Activated CD8-positive, alpha-beta T cell treated with anti-CD3 and anti-CD28 coated beads for 36 hours (primary cell): ENCODE measurements at regions of chrX and their contacts with region 1.

Region 1: GRCh38 chrX:17032351-17032750 is 85.9 kb downstream of the REPS2 start:
- DNase-seq: no peak
- ATAC-seq: no peak
- H3K4me3 Mint-ChIP-seq: no peak overlapping the region
- H3K27ac Mint-ChIP-seq: no peak overlapping the region
- H3K4me1 Mint-ChIP-seq: no peaks in the 10 kb centered on the region
- H3K27me3 Mint-ChIP-seq: no peaks in the 10 kb centered on the region
- CTCF ChIP-seq: no peak

Region 2: GRCh38 chrX:16953606-16954220 is 78.6 kb before region 1 on chrX:
- CTCF ChIA-PET with region 1: no interaction called
- POLR2A ChIA-PET with region 1: no interaction called
- intact Hi-C with region 1: no loop called
- DNase-seq: no peak
- ATAC-seq: no peak
- H3K4me3 Mint-ChIP-seq: no peak overlapping the region
- H3K27ac Mint-ChIP-seq: no peak overlapping the region
- H3K4me1 Mint-ChIP-seq: no peaks in the 10 kb centered on the region
- H3K27me3 Mint-ChIP-seq: peaks cover 3% of the 10 kb centered on the region
- CTCF ChIP-seq: no peak

Region 3: GRCh38 chrX:17046478-17047097 is 14.2 kb after region 1 on chrX:
- CTCF ChIA-PET with region 1: interaction called, 10 read pairs
- POLR2A ChIA-PET with region 1: interaction called, 6 read pairs
- intact Hi-C with region 1: no loop called
- DNase-seq: peak; percentile 65
- ATAC-seq: no peak
- H3K4me3 Mint-ChIP-seq: no peak overlapping the region
- H3K27ac Mint-ChIP-seq: no peak overlapping the region
- H3K4me1 Mint-ChIP-seq: no peaks in the 10 kb centered on the region
- H3K27me3 Mint-ChIP-seq: no peaks in the 10 kb centered on the region
- CTCF ChIP-seq: peak; percentile 42

Region 4: GRCh38 chrX:17078031-17078720 is 45.8 kb after region 1 on chrX:
- CTCF ChIA-PET with region 1: no interaction called
- POLR2A ChIA-PET with region 1: no interaction called
- intact Hi-C with region 1: no loop called
- DNase-seq: no peak
- ATAC-seq: no peak
- H3K4me3 Mint-ChIP-seq: no peak overlapping the region
- H3K27ac Mint-ChIP-seq: no peak overlapping the region
- H3K4me1 Mint-ChIP-seq: no peaks in the 10 kb centered on the region
- H3K27me3 Mint-ChIP-seq: peaks cover 4% of the 10 kb centered on the region
- CTCF ChIP-seq: no peak